Activated CD4-positive, alpha-beta T cell treated with anti-CD3 and anti-CD28 coated beads, Interleukin-2, amount 10 ng/mL, durations not matched to agents 24 days and 14 days (primary cell): ENCODE measurements at regions of chrX and their contacts with region 1.

Region 1: GRCh38 chrX:15674841-15675489 is 10.4 kb upstream of the CLTRN start:
- DNase-seq: peak; percentile 94
- H3K4me3 Mint-ChIP-seq: no peak overlapping the region
- H3K27ac Mint-ChIP-seq: no peak overlapping the region
- H3K4me1 Mint-ChIP-seq: peaks cover 11% of the 10 kb centered on the region
- H3K27me3 Mint-ChIP-seq: peaks cover 2% of the 10 kb centered on the region

Region 2: GRCh38 chrX:14872851-14873675 is 801.9 kb before region 1 on chrX and contains the starts of genes FANCB and MOSPD2:
- intact Hi-C with region 1: loop called (anchors 2 kb)
- DNase-seq: peak; percentile 98
- H3K4me3 Mint-ChIP-seq: peak within 1 kb of the TSS; percentile 88
- H3K27ac Mint-ChIP-seq: peak within 1 kb of the TSS; percentile 92
- H3K4me1 Mint-ChIP-seq: peaks cover 16% of the 10 kb centered on the region
- H3K27me3 Mint-ChIP-seq: no peaks in the 10 kb centered on the region
- total RNA-seq, gene FANCB: 18.9 TPM in 2 replicates
- total RNA-seq, gene MOSPD2: 15.3 and 16.0 TPM in 2 replicates

Region 3: GRCh38 chrX:15335135-15336022 is 339.6 kb before region 1 on chrX and contains the start of gene PIGA:
- intact Hi-C with region 1: loop called (anchors 1 kb)
- DNase-seq: peak; percentile 97
- H3K4me3 Mint-ChIP-seq: peak within 1 kb of the TSS; percentile 94
- H3K27ac Mint-ChIP-seq: peak within 1 kb of the TSS; percentile 94
- H3K4me1 Mint-ChIP-seq: peaks cover 9% of the 10 kb centered on the region
- H3K27me3 Mint-ChIP-seq: peaks cover 11% of the 10 kb centered on the region
- total RNA-seq, gene PIGA: 29.4 and 33.9 TPM in 2 replicates

Region 4: GRCh38 chrX:15349046-15349445 is 325.9 kb before region 1 on chrX:
- intact Hi-C with region 1: no loop called
- DNase-seq: peak; percentile 69
- H3K4me3 Mint-ChIP-seq: no peak overlapping the region
- H3K27ac Mint-ChIP-seq: no peak overlapping the region
- H3K4me1 Mint-ChIP-seq: no peaks in the 10 kb centered on the region
- H3K27me3 Mint-ChIP-seq: peaks cover 11% of the 10 kb centered on the region

Region 5: DNA sequence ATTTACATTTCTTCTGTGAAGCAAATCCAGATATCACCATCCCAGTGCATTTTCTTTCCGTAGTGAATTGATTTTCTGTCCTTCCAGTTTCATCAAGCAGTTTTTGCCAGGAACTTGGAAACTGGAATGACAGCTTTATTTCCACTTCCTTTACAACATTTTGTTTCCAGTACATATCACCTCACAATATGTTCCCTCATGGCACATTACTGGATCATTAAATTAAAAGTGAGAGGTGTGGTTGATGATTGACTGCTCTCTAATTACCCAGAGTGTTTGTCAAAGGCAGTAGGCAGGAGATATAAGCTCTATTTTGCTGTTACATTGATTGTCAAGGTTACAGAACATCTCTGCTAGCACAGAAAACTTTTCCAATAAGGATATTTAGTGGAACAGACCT is 51.9 kb before region 1 on chrX:
- intact Hi-C with region 1: no loop called
- DNase-seq: no peak
- H3K4me3 Mint-ChIP-seq: no peak overlapping the region
- H3K27ac Mint-ChIP-seq: no peak overlapping the region
- H3K4me1 Mint-ChIP-seq: no peaks in the 10 kb centered on the region
- H3K27me3 Mint-ChIP-seq: peaks cover 2% of the 10 kb centered on the region

Region 6: GRCh38 chrX:15737960-15738902 is 63.3 kb after region 1 on chrX and contains the start of gene CA5B:
- intact Hi-C with region 1: loop called (anchors 1 kb)
- DNase-seq: peak; percentile 99
- H3K4me3 Mint-ChIP-seq: peak within 1 kb of the TSS; percentile 90
- H3K27ac Mint-ChIP-seq: peak within 1 kb of the TSS; percentile 76
- H3K4me1 Mint-ChIP-seq: peaks cover 21% of the 10 kb centered on the region
- H3K27me3 Mint-ChIP-seq: no peaks in the 10 kb centered on the region
- total RNA-seq, gene CA5B: 4.7 and 5.9 TPM in 2 replicates

Region 7: GRCh38 chrX:15854712-15855567 is 180.0 kb after region 1 on chrX and contains the start of gene AP1S2:
- intact Hi-C with region 1: loop called (anchors 1 kb)
- DNase-seq: peak; percentile 98
- H3K4me3 Mint-ChIP-seq: peak within 1 kb of the TSS; percentile 91
- H3K27ac Mint-ChIP-seq: peak within 1 kb of the TSS; percentile 97
- H3K4me1 Mint-ChIP-seq: peaks cover 18% of the 10 kb centered on the region
- H3K27me3 Mint-ChIP-seq: peaks cover 3% of the 10 kb centered on the region
- total RNA-seq, gene AP1S2: 24.2 and 28.8 TPM in 2 replicates